ENCODE measurements at regions of chr4 and their contacts with region 1.

Region 1: DNA sequence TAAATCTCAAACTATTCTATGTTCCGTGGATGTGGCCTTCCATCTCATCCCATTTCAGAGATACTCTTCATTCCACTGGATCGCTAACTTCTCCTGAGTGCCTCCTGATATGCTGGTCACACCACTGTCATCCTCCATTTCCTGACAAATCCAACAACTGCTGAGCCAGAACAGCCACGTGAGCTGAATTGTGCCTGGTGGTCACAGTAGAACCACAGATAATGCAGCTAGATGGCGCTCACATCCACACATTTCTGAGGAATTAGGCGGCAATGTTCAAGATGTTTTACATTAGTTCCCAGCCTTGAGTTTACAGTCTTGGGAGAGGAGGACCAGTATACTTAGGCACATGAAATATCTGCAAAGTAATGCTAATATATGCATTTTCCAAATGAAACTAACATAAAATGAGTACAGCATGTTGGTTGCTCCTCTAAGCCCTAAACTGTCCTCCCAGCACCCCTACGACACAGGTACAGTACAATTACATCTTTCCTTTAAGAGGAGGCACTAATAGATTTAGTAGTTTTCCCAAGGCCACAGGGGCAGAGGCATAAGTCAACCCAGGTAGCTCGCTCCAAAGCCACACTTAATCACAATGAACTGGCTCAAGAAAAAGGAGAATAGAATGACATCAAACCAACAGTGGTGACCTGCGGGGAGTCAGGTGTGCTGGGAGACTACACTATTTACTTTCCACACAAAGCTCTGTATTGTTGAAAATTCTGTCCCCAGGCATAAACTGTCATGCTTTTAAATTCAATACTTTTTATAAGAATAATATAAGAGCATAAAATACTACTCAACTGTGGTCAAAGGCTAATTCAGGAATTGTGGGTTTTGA is 134.2 kb downstream of the CHIC2 start:
- DNase-seq: peak; percentile 66
- ATAC-seq: peak; percentile 66
- H3K4me3 Mint-ChIP-seq: no peak overlapping the region
- H3K27ac Mint-ChIP-seq: no peak overlapping the region
- H3K4me1 Mint-ChIP-seq: no peaks in the 10 kb centered on the region
- H3K27me3 Mint-ChIP-seq: peaks cover 5% of the 10 kb centered on the region

Region 2: GRCh38 chr4:53763813-53764597 is 166.2 kb before region 1 on chr4:
- CTCF ChIA-PET with region 1: no interaction called
- DNase-seq: no peak
- ATAC-seq: no peak
- H3K4me3 Mint-ChIP-seq: no peak overlapping the region
- H3K27ac Mint-ChIP-seq: no peak overlapping the region
- H3K4me1 Mint-ChIP-seq: no peaks in the 10 kb centered on the region
- H3K27me3 Mint-ChIP-seq: no peaks in the 10 kb centered on the region

Region 3: GRCh38 chr4:53908661-53909078 is 21.5 kb before region 1 on chr4:
- CTCF ChIA-PET with region 1: interaction called, 14 read pairs
- DNase-seq: no peak
- ATAC-seq: peak; percentile 55
- H3K4me3 Mint-ChIP-seq: no peak overlapping the region
- H3K27ac Mint-ChIP-seq: no peak overlapping the region
- H3K4me1 Mint-ChIP-seq: peaks cover 11% of the 10 kb centered on the region
- H3K27me3 Mint-ChIP-seq: peaks cover 61% of the 10 kb centered on the region

Region 4: DNA sequence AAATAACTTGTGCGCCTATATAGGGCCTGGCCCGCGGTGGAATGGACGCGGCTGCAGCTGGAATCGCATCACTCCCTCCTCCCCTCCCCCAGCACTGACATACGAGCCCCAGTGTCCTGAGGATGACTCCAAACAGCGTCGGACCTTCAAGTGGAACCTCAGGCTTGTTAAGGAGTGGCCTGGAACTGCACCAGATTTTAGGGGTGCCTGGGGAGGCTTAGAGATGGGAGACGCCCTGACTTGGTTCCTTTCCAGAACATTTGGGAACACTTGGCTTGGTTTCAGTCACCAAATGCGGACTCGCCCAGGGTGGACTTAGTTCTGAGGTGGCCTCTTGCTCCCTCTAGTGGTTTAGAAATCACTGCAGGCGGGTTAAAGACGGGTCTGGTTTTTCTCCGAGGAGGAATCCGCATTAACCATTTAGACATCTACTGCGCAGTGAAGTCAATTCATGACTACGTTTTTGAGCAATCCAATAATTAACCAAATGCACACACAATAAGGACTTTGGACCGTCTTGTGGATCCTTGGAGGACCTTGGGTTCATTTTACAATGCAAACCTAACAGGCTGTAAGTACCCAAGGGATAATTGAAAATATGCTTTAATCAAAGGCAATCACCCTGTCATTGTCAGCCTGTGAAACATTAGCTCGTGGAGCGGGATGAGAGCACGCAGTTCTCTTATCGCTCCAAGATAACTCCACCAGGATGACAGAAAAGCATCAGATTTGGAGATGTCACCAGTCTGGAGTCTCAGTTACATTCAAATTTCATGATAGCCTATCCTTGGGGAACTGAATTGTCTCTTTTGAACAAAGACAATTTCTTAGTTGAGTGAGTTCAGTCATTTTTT is 287.7 kb after region 1 on chr4:
- CTCF ChIA-PET with region 1: interaction called, 44 read pairs
- DNase-seq: peak; percentile 61
- ATAC-seq: peak; percentile 78
- H3K4me3 Mint-ChIP-seq: no peak overlapping the region
- H3K27ac Mint-ChIP-seq: no peak overlapping the region
- H3K4me1 Mint-ChIP-seq: peaks cover 4% of the 10 kb centered on the region
- H3K27me3 Mint-ChIP-seq: peaks cover 39% of the 10 kb centered on the region

Measured in activated CD8-positive, alpha-beta memory T cell treated with anti-CD3 and anti-CD28 coated beads, Interleukin-2, amount 10 ng/mL, durations not matched to agents 7 days and 5 days (primary cell).